Activated T-helper 2 cell treated with anti-CD3 and anti-CD28 coated beads, Interferon-gamma antibody, Interleukin-2, Interleukin-4, amounts not matched to agents 10 μg/mL and 5 μg/mL and 100 μg/mL, durations not matched to agents 14 hours and 24 hours and 36 hours (primary cell): ENCODE measurements at regions of chr1 and their contacts with region 1.

Region 1: GRCh38 chr1:85276215-85276977 is at the start of gene BCL10:
- DNase-seq: peak; percentile 98
- H3K4me3 Mint-ChIP-seq: peak within 1 kb of the TSS; percentile 83
- H3K27ac Mint-ChIP-seq: peak within 1 kb of the TSS; percentile 87
- H3K4me1 Mint-ChIP-seq: peaks cover 47% of the 10 kb centered on the region
- H3K27me3 Mint-ChIP-seq: peaks cover 12% of the 10 kb centered on the region
- total RNA-seq, gene BCL10: 24.4 and 27.4 TPM in 2 replicates

Region 2: DNA sequence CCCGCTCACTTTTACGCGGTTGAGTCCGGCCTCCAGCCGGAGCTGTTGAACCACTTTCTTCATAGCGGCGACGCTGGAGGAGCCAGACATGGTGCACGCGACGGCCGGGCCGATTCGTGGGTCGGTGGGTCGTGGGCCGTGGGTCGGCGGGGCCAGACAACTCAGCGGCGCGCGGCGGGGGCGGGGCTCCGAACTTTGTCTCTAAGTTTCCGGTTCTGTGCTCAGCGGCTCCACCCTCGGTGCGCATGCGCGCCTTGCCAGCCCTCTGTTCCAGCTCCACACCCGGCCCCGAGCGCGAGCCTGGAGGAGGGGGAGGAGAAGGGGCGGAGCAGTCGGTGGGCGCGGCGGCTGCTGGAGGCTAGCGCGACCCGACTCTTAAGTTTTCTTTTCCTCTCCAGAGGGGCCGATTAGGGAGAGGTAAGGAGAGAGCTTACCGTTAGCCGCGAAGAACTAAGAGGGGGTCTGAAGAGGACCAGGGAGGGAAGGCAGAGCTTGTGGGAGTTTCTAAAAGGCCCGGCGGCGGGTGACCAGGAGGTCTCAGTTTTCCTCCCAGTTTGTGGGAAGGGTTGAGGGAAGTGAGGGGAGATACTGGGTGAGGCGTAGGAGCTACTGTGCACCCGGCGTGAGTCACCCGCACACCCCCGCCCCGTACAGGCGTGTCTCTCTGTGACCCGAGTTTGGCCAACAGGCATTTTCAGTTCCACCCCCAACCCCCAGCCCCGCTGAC is 770.2 kb before region 1 on chr1 and contains the starts of genes GNG5 and SPATA1:
- intact Hi-C with region 1: loop called (anchors 5 kb)
- DNase-seq: peak; percentile 97
- H3K4me3 Mint-ChIP-seq: peak within 1 kb of the TSS; percentile 100
- H3K27ac Mint-ChIP-seq: peak within 1 kb of the TSS; percentile 99
- H3K4me1 Mint-ChIP-seq: peaks cover 26% of the 10 kb centered on the region
- H3K27me3 Mint-ChIP-seq: no peaks in the 10 kb centered on the region
- total RNA-seq, gene GNG5: 118 and 126 TPM in 2 replicates
- total RNA-seq, gene SPATA1: 1.4 and 1.5 TPM in 2 replicates

Region 3: GRCh38 chr1:85061711-85062424 is 214.5 kb before region 1 on chr1:
- intact Hi-C with region 1: loop called (anchors 5 kb)
- DNase-seq: peak; percentile 89
- H3K4me3 Mint-ChIP-seq: peak overlapping the region; percentile 79
- H3K27ac Mint-ChIP-seq: peak overlapping the region; percentile 83
- H3K4me1 Mint-ChIP-seq: peaks cover 18% of the 10 kb centered on the region
- H3K27me3 Mint-ChIP-seq: peaks cover 21% of the 10 kb centered on the region

Region 4: DNA sequence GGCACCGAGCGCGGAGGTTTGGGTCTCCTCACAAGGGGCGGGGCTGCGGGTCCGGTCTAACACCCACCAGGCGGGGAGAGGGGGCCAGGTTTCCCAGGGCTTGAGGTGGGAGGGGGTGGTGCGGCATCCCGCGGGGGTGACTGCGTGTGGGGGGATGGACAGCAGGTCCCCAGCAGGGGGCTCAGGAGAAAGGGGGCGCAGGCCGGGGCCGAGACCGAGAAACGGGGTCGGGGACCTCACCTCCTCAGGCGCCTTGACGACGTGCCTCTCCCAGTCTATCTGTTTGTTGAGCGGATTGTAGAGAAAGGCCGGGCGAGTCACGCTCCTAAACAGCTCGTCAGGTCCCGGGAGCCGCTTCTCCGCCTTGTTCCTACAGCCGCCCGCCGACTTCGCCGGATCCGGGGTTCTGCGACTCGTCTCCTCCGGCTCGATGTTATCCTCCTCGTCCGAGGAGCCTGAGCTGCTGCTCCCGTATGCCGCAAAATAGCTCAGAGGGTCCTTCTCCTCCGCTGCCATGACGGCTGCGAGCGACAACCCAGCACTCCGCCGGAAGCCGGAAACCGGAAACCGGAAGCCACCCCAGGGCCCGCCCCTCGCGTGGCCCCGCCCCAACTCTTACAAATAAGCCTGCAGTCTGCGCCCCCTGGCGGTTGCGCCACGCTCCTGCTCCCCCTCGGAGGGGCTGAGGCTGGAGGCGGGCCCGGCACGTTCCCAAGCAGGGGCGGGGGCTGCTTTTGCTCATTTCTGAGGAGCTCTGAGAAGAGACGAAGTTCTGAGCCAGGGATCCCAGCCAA is 17.1 kb before region 1 on chr1 and contains the start of gene C1orf52:
- intact Hi-C with region 1: loop called (anchors 1 kb)
- DNase-seq: peak; percentile 94
- H3K4me3 Mint-ChIP-seq: peak within 1 kb of the TSS; percentile 95
- H3K27ac Mint-ChIP-seq: peak within 1 kb of the TSS; percentile 89
- H3K4me1 Mint-ChIP-seq: peaks cover 23% of the 10 kb centered on the region
- H3K27me3 Mint-ChIP-seq: no peaks in the 10 kb centered on the region
- total RNA-seq, gene C1orf52: 23.9 and 25.8 TPM in 2 replicates

Region 5: DNA sequence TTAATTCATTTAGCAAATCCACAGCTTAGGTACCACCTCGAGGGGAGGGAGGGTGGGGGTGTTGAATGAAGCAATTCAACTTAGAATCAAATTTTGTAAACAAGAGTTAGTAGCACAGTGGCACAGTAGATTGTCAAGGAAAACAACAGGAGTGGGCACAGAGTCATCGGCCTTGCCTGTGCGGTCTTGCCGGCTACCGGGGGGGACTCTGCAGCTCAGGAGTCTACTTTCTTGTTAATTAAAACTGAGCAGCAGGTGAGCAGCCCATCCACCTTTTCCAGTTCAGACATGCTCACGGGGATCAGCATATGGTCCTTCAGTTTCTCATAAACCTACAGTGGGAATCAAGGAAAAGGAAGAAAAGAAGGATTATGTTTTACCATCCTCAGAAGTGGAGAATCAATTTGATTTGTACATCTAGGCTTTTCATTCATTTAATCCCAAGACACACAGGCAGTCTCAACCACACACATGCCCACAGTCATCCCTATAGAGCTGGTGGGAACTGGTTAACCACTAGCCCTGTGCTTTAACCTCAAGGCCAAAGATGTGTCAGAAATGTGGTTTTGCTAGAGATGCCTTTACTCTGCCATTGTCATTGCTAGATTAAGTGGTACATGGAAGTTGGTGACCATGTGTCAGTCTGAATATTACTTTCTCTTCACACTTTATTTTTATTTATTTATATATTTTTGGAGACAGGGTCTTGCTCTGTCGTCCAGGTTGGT is 45.0 kb after region 1 on chr1:
- intact Hi-C with region 1: loop called (anchors 2 kb)
- DNase-seq: peak; percentile 10
- H3K4me3 Mint-ChIP-seq: no peak overlapping the region
- H3K27ac Mint-ChIP-seq: no peak overlapping the region
- H3K4me1 Mint-ChIP-seq: peaks cover 18% of the 10 kb centered on the region
- H3K27me3 Mint-ChIP-seq: peaks cover 69% of the 10 kb centered on the region

Region 6: GRCh38 chr1:85387781-85388180 is 111.4 kb after region 1 on chr1:
- intact Hi-C with region 1: no loop called
- DNase-seq: no peak
- H3K4me3 Mint-ChIP-seq: no peak overlapping the region
- H3K27ac Mint-ChIP-seq: no peak overlapping the region
- H3K4me1 Mint-ChIP-seq: no peaks in the 10 kb centered on the region
- H3K27me3 Mint-ChIP-seq: peaks cover 3% of the 10 kb centered on the region